ENCODE measurements at regions of chr7 and their contacts with region 1.

Region 1: DNA sequence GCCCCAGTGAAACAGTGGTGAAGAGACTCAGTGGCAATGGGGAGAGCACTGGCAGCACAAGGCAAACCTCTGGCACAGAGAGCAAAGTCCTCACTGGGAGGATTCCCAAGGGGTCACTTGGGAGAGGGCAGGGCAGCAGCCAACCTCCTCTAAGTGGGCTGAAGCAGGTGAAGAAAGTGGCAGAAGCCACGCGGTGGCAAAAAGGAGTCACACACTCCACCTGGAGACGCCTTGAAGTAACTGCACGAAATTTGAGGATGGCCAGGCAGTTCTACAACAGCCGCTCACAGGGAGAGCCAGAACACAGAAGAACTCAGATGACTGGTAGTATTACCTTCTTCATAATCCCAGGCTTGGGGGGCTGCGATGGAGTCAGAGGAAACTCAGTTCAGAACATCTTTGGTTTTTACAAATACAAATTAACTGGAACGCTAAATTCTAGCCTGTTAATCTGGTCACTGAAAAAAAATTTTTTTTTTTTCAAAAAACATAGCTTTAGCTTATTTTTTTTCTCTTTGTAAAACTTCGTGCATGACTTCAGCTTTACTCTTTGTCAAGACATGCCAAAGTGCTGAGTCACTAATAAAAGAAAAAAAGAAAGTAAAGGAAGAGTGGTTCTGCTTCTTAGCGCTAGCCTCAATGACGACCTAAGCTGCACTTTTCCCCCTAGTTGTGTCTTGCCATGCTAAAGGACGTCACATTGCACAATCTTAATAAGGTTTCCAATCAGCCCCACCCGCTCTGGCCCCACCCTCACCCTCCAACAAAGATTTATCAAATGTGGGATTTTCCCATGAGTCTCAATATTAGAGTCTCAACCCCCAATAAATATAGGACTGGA is 435 bp upstream of the IL6 start:
- DNase-seq: peak; percentile 54
- H3K4me3 ChIP-seq: peak overlapping the region in 1 of 2 donors; percentile 17
- H3K27ac ChIP-seq: peak overlapping the region in 1 of 2 donors; percentile 33
- H3K4me1 ChIP-seq: peaks cover 14% of the 10 kb centered on the region
- H3K27me3 ChIP-seq: no peaks in the 10 kb centered on the region
- CTCF ChIP-seq: peak in 1 of 3 experiments; percentile 39
- POLR2A ChIP-seq: no peak

Region 2: GRCh38 chr7:22559829-22560489 is 166.6 kb before region 1 on chr7:
- intact Hi-C with region 1: loop called (anchors 5 kb)
- DNase-seq: peak; percentile 86
- H3K4me3 ChIP-seq: no peak overlapping the region
- H3K27ac ChIP-seq: no peak overlapping the region
- H3K4me1 ChIP-seq: peaks cover 21% of the 10 kb centered on the region
- H3K27me3 ChIP-seq: no peaks in the 10 kb centered on the region
- CTCF ChIP-seq: peak; percentile 76 to 91 (median 85)
- POLR2A ChIP-seq: no peak

Region 3: GRCh38 chr7:22577396-22578001 is 149.1 kb before region 1 on chr7:
- intact Hi-C with region 1: loop called (anchors 5 kb)
- DNase-seq: peak; percentile 32
- H3K4me3 ChIP-seq: no peak overlapping the region
- H3K27ac ChIP-seq: no peak overlapping the region
- H3K4me1 ChIP-seq: peaks cover 5% of the 10 kb centered on the region
- H3K27me3 ChIP-seq: no peaks in the 10 kb centered on the region
- CTCF ChIP-seq: no peak
- POLR2A ChIP-seq: no peak

Region 4: DNA sequence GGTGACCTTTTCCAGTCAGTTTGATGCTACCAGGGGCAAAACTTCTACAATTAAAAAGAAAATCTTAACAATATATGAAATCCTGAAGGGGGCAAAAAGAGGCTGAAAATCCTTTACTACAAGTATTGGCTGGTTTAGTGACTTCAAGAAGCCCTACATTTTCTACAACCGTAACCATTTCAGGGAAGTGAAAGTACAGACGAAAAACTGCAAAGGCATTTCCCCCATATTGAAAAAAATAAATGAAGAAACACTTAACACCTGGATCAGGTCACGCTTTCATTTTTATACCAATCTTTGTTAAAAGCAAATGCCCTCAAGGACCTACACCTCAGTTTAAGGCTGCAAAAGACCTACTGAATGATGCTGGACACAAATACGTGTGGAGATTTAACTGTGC is 39.0 kb after region 1 on chr7:
- intact Hi-C with region 1: no loop called
- DNase-seq: no peak
- H3K4me3 ChIP-seq: no peak overlapping the region
- H3K27ac ChIP-seq: no peak overlapping the region
- H3K4me1 ChIP-seq: no peaks in the 10 kb centered on the region
- H3K27me3 ChIP-seq: no peaks in the 10 kb centered on the region
- CTCF ChIP-seq: no peak
- POLR2A ChIP-seq: no peak

Measured in testis (tissue), 5 donors.